Heart left ventricle (tissue), 16 donors: ENCODE measurements at regions of chr1 and their contacts with region 1.

Region 1: GRCh38 chr1:7789828-7790227 is 5.7 kb downstream of the PER3 start:
- DNase-seq: no peak
- ATAC-seq: no peak
- H3K4me3 ChIP-seq: no peak overlapping the region
- H3K27ac ChIP-seq: no peak overlapping the region
- H3K4me1 ChIP-seq: peaks cover 0 to 31% (median 20%) of the 10 kb centered on the region in 12 donors
- H3K27me3 ChIP-seq: no peaks in the 10 kb centered on the region
- CTCF ChIP-seq: no peak
- POLR2A ChIP-seq: no peak

Region 2: DNA sequence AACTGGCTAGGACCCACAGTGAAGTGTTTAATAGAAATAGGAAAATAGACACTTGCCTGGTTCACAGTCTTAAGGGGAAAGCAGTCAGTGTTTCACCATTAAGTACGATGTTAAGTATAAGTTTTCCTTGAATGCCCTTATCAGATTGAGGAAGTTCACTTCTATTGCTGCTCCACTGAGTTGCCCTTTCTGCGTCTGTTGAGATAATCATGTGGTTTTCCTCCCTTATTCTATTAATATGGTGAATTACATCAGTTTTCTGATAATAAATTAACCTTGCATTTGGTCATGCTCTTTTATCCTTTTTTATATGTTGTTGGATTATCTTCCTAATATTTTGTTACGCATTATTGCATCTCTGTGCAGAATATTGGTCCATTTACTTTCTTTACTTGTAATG is 41.6 kb after region 1 on chr1:
- intact Hi-C with region 1: loop called in 1 of 10 experiments (anchors 5 kb)
- DNase-seq: no peak
- ATAC-seq: peak in 1 of 4 donors; percentile 13
- H3K4me3 ChIP-seq: no peak overlapping the region
- H3K27ac ChIP-seq: no peak overlapping the region
- H3K4me1 ChIP-seq: peaks cover 0 to 11% (median 1%) of the 10 kb centered on the region in 12 donors
- H3K27me3 ChIP-seq: no peaks in the 10 kb centered on the region
- CTCF ChIP-seq: no peak
- POLR2A ChIP-seq: no peak